Spleen (tissue), 13 donors: ENCODE measurements at regions of chr10 and their contacts with region 1.

Region 1: DNA sequence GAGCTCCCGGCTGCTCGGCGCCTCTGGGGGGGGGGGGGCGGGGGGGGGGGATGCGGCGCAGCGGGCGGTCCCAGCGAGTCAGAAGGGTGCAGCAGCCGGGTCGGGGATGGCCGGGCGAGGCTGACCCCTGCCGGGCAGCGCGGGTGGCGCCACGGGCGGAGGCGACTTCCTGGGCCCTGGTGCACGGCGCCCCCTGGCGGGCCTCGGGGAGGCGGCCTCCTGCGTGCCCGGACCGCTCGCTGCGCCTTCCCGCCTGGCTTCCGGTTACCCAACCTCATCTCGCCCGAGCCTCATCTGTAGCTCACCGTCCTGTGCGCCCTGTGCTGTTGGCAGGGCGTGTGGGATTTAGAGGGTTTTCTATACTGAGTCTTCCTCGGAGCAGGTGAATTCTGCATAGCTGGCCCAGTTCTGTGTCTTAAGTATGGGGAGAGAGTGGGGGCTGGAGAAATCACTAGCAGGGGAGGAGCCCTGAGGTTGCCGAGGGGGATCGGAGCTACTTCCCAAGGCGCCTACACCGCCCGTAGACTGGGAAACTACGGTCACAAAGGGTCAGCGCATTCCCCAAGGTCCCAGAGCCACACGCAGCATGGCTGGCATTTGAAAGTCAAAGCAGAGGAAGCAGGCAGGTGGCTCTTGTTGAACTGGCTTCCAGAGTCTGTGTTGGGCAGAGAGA is 28.3 kb upstream of the WDFY4 start:
- DNase-seq: peak; percentile 99
- H3K4me3 ChIP-seq: peak overlapping the region in 7 of 8 donors; percentile 19 to 70 (median 44)
- H3K27ac ChIP-seq: peak overlapping the region in 1 of 8 donors; percentile 26
- H3K4me1 ChIP-seq: peaks cover 11 to 58% (median 31%) of the 10 kb centered on the region in 6 donors
- H3K27me3 ChIP-seq: peaks cover 0 to 57% (median 8%) of the 10 kb centered on the region in 7 donors
- CTCF ChIP-seq: peak; percentile 71 to 100 (median 98)
- POLR2A ChIP-seq: no peak

Region 2: DNA sequence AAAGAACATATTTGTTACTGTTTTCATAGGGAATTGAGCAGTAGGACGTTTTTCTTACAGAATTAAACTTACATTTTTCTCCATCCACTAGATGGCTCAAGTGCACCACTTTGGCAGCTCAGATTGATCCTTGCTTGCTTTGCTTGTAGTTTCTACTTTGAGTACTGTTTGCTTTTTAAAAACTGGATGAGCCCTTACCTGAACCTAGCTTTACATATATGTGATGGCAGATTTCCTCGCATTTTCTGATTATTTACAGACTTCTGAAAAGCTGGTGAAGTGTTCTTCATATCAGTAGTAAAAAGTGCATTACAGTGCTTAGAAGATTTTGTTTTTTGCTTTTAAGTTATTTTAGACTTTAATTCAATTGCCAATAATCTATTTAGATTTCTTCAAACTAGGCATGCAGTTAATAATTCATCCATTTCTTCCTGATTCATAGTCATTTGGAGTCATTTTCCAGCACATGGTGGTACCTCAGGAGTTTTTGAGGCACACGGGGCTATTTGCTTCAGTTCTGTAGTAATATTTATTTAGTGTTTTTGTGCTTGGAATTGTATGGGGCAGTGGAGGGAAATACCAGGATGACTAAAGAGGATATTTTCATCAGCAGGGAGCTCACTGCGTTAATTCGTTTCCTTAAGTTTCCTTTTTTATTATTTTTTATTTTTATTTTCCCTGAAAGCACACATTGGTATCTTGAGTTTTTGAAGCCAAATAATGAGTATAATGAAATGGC is 292.6 kb before region 1 on chr10:
- intact Hi-C with region 1: loop called (anchors 5 kb)
- DNase-seq: no peak
- H3K4me3 ChIP-seq: no peak overlapping the region
- H3K27ac ChIP-seq: no peak overlapping the region
- H3K4me1 ChIP-seq: peaks cover 4 to 39% (median 21%) of the 10 kb centered on the region in 6 donors
- H3K27me3 ChIP-seq: no peaks in the 10 kb centered on the region
- CTCF ChIP-seq: peak in 9 of 11 experiments; percentile 13 to 63 (median 47)
- POLR2A ChIP-seq: no peak

Region 3: DNA sequence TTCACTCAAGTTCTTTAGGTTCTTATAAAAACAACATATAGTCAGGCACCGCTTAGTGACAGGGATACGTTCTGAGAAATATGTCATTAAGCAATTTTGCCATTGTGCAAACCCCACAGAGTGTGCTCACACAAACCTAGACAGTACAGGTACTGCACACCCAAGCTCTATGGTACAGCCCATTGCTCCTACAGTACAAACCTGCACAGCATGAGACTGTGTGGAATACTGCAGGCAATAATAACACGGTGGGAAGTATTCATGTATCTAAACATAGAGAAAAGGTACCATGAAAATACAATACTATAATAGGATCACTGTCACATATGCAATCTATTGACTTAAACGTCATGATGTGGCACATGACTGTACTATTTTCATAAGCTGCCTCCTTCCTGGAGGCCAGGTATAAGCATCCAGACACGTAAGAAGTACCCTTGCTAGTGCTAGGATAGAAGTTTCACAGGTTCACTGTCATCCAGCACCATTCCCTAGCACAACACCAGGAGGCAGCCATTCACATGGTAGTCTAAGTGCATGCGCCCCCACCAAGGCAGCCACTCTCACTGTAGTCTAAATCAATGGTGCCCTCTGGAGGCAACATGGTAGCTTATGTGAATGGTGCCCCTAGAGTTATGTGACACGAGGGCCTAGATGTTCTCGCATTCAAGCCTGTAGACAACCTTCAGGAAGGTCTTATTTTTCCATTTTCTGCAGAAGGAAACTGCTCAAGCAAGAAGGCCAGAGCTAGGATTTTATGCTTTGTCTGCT is 150.0 kb before region 1 on chr10:
- intact Hi-C with region 1: no loop called
- DNase-seq: no peak
- H3K4me3 ChIP-seq: no peak overlapping the region
- H3K27ac ChIP-seq: no peak overlapping the region
- H3K4me1 ChIP-seq: peaks cover 0 to 17% (median 5%) of the 10 kb centered on the region in 6 donors
- H3K27me3 ChIP-seq: no peaks in the 10 kb centered on the region
- CTCF ChIP-seq: no peak
- POLR2A ChIP-seq: no peak

Region 4: DNA sequence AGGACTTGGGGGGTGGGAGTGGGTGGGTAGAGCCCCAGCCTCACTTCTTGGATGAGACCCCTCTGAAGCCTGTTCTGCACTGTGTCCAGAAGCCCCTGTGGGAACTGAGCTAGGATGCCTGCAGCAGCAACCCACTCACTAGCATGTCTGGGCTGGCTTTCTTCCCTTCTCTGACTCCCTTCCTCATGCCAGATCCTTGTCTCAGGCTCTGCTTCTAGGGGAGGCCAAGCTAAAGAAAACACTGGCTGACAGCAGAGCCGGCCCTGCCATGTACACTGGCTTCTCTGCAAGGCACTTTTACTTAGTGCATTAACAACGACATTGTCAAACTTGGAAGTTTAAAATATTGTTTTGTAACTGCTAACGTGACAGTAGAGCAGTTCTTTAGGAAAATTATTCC is 101.7 kb before region 1 on chr10:
- intact Hi-C with region 1: loop called (anchors 2 kb)
- DNase-seq: no peak
- H3K4me3 ChIP-seq: no peak overlapping the region
- H3K27ac ChIP-seq: no peak overlapping the region
- H3K4me1 ChIP-seq: peaks cover 0 to 12% (median 4%) of the 10 kb centered on the region in 6 donors
- H3K27me3 ChIP-seq: no peaks in the 10 kb centered on the region
- CTCF ChIP-seq: no peak
- POLR2A ChIP-seq: no peak

Region 5: DNA sequence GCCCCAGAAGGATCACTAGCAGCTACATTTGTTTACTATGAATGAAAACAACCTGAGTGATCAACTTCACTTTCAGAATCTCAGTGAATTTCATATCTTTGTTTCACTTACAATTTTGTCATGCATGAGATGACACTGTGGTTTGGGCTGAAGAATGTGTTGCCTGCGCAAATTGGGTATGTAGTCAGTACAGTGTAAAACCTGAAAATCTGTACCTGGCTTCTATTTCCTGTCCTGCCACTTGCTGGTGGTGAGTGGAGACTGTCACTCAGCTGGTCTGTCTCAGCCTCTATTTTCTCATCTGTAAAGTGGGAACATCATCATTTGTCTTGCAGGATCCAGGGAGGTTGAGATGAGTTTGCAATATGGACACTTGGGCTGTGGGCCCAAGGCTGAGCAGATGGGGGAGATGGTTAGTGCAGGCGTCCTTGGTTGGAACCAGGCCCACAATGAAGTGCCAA is 146.3 kb after region 1 on chr10:
- intact Hi-C with region 1: loop called (anchors 10 kb)
- DNase-seq: no peak
- H3K4me3 ChIP-seq: no peak overlapping the region
- H3K27ac ChIP-seq: peak overlapping the region in 5 of 8 donors; percentile 87 to 94 (median 90)
- H3K4me1 ChIP-seq: peaks cover 17 to 85% (median 63%) of the 10 kb centered on the region in 6 donors
- H3K27me3 ChIP-seq: no peaks in the 10 kb centered on the region
- CTCF ChIP-seq: no peak
- POLR2A ChIP-seq: no peak

Region 6: DNA sequence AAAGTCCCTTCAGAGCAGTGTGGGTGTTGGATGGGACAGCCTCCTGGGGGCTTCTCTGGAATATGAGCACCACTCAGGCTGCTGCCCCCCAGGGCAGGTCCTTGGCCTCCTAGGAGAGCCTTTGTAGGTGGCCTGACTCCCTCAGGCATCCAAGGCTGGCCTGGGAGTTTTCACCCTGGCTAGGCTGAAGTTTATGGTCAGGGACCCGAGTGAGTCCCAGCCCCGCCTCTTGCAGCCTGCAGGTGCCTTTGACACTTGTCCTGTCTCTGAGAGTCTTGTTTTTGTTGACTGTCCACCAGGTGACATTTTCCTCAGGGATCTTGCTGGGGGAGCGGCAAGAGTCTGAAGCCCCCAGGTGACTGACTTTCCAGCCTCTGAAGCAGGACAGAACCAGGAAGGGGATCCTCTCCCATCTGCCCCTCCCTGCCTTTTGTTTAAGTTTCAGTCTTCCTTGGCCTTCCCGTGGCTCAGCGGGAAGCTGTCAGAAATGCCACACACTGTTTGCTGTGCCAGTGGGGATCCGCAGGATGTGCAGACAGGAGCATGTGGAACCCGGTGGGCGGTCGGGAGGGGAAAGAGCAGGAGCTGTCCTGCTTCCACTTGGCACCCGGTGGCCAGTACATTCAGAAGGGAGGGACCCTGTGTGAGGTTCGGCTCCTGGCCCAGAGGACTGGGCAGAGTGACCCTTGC is 223.8 kb after region 1 on chr10:
- intact Hi-C with region 1: no loop called
- DNase-seq: no peak
- H3K4me3 ChIP-seq: no peak overlapping the region
- H3K27ac ChIP-seq: no peak overlapping the region
- H3K4me1 ChIP-seq: no peaks in the 10 kb centered on the region
- H3K27me3 ChIP-seq: no peaks in the 10 kb centered on the region
- CTCF ChIP-seq: no peak
- POLR2A ChIP-seq: no peak

Region 7: DNA sequence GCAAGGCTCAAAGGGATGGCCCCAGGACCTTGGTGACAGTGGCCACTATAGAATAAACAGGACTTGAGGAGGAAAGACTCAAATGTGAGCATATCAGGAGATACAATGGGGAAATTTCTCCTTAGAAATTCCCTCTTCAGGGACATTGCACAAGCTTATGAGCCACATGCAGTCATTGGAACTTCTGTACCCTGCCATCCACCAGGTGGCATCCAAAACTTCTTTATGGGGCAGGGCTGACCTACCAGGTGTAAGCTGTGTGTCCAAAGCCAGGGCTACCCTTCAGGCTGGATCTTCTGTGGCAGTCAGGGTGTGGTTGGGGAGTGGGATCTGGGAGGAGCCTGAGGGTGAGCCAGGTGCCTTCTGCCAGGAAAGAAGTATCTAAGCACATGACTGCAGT is 319.8 kb after region 1 on chr10:
- intact Hi-C with region 1: loop called (anchors 10 kb)
- DNase-seq: no peak
- H3K4me3 ChIP-seq: no peak overlapping the region
- H3K27ac ChIP-seq: no peak overlapping the region
- H3K4me1 ChIP-seq: peaks cover 0 to 3% (median under 1%) of the 10 kb centered on the region in 6 donors
- H3K27me3 ChIP-seq: no peaks in the 10 kb centered on the region
- CTCF ChIP-seq: peak in 4 of 11 experiments; percentile 12 to 27 (median 19)
- POLR2A ChIP-seq: no peak

Region 8: DNA sequence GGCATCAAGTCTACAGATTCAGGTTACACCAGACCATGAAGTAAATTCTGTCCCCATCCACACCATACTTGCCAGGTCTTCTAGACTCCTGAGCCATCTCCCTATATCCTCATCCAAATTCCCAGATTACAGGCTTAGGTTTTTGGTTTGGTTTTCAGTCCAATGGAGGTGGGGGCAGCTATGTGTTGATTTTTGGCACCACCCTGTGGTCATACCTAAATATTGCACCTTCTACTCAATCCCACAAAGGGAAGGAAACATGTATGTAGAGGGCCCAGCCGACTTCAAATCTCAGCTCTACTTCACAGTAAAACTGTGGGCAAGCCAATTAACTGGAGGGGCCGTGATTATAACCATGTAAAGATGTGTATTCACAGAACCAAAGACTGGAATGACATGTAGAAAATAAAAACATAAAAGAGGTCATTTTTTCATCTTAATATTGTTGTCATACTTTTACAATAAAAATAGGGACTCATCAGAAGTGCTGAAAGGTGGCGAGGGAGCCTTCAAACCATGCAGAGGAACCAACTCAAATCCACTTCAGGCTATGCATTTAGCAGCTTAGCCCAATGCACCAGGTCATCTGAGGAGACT is 862.7 kb after region 1 on chr10:
- intact Hi-C with region 1: loop called (anchors 5 kb)
- DNase-seq: no peak
- H3K4me3 ChIP-seq: no peak overlapping the region
- H3K27ac ChIP-seq: no peak overlapping the region
- H3K4me1 ChIP-seq: peaks cover 0 to 10% (median 2%) of the 10 kb centered on the region in 6 donors
- H3K27me3 ChIP-seq: no peaks in the 10 kb centered on the region
- CTCF ChIP-seq: peak; percentile 34 to 82 (median 64)
- POLR2A ChIP-seq: no peak